ENCODE measurements at regions of chr3 and their contacts with region 1.

Region 1: GRCh38 chr3:67113802-67114407 is 115.8 kb downstream of the KBTBD8 start:
- DNase-seq: peak; percentile 23
- H3K4me3 ChIP-seq: no peak overlapping the region
- CTCF ChIP-seq: peak; percentile 99

Region 2: GRCh38 chr3:66789580-66790237 is 324.2 kb before region 1 on chr3:
- CTCF ChIA-PET with region 1: no interaction called
- POLR2A ChIA-PET with region 1: no interaction called
- DNase-seq: no peak
- H3K4me3 ChIP-seq: no peak overlapping the region
- CTCF ChIP-seq: no peak

Region 3: GRCh38 chr3:67090474-67090873 is 23.4 kb before region 1 on chr3:
- CTCF ChIA-PET with region 1: interaction called, 48 read pairs
- POLR2A ChIA-PET with region 1: no interaction called
- DNase-seq: peak; percentile 45
- H3K4me3 ChIP-seq: no peak overlapping the region
- CTCF ChIP-seq: no peak

Region 4: GRCh38 chr3:67127254-67127653 is 13.3 kb after region 1 on chr3:
- CTCF ChIA-PET with region 1: interaction called, 19 read pairs
- POLR2A ChIA-PET with region 1: no interaction called
- DNase-seq: no peak
- H3K4me3 ChIP-seq: no peak overlapping the region
- CTCF ChIP-seq: no peak

Region 5: GRCh38 chr3:67384760-67385397 is 271.0 kb after region 1 on chr3:
- CTCF ChIA-PET with region 1: interaction called, 13 read pairs
- POLR2A ChIA-PET with region 1: no interaction called
- DNase-seq: no peak
- H3K4me3 ChIP-seq: no peak overlapping the region
- CTCF ChIP-seq: peak; percentile 68

Region 6: GRCh38 chr3:67790043-67790442 is 676.1 kb after region 1 on chr3:
- CTCF ChIA-PET with region 1: interaction called, 32 read pairs
- POLR2A ChIA-PET with region 1: no interaction called
- DNase-seq: no peak
- H3K4me3 ChIP-seq: no peak overlapping the region
- CTCF ChIP-seq: peak; percentile 67

Region 7: GRCh38 chr3:68876112-68876713 is 1762.3 kb after region 1 on chr3:
- CTCF ChIA-PET with region 1: interaction called, 46 read pairs
- POLR2A ChIA-PET with region 1: no interaction called
- DNase-seq: peak; percentile 26
- H3K4me3 ChIP-seq: no peak overlapping the region
- CTCF ChIP-seq: peak; percentile 75